Right cardiac atrium (tissue), 5 donors: ENCODE measurements at regions of chr5 and their contacts with region 1.

Region 1: GRCh38 chr5:103475629-103476240 is 86.9 kb downstream of the NUDT12 start:
- DNase-seq: no peak
- ATAC-seq: peak; percentile 41 to 51
- H3K4me3 ChIP-seq: no peak overlapping the region
- H3K27ac ChIP-seq: no peak overlapping the region
- H3K4me1 ChIP-seq: no peaks in the 10 kb centered on the region
- H3K27me3 ChIP-seq: no peaks in the 10 kb centered on the region

Region 2: DNA sequence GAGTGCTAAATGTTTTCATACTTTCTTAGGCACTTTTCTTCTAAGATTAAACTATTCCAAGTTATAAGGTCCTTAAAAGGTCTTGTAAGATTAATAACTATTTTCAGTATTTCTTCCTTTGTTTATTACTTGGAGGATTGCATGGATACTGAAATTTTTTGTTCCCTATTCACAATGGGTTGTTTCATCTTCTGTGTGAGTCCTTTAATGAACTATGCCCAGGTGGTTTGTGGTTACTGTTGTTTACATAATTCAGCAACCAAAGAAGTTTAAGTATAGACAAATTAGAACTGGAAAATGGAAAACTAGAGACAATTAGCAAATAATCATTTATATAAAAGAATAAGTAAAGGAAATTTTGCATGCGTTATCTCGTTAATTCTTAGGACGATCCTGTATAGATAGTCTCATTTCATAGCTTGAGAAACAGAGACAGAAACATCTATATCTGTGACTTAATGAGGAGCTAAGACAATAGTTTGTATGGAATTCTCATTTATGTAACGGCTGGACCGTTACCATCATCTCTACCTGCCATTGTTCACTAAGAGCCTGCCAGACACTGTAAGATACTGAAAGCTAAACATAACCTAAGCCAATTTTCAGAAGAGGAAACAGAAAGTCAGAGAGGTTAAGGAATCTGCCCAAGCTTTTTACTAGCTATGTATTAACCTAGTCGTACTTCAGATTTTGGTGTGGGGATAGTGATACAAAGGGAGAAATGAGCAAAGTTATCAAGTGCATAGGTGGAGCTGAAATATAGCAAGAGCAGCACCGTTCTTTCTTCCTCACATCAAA is 572.5 kb before region 1 on chr5:
- intact Hi-C with region 1: no loop called
- DNase-seq: no peak
- ATAC-seq: peak in 1 of 2 donors; percentile 63
- H3K4me3 ChIP-seq: no peak overlapping the region
- H3K27ac ChIP-seq: no peak overlapping the region
- H3K4me1 ChIP-seq: peaks cover 2% of the 10 kb centered on the region
- H3K27me3 ChIP-seq: no peaks in the 10 kb centered on the region

Region 3: GRCh38 chr5:103232393-103232999 is 243.2 kb before region 1 on chr5:
- intact Hi-C with region 1: loop called (anchors 2 to 10 kb)
- DNase-seq: no peak
- ATAC-seq: peak in 1 of 2 donors; percentile 83
- H3K4me3 ChIP-seq: no peak overlapping the region
- H3K27ac ChIP-seq: no peak overlapping the region
- H3K4me1 ChIP-seq: no peaks in the 10 kb centered on the region
- H3K27me3 ChIP-seq: no peaks in the 10 kb centered on the region

Region 4: GRCh38 chr5:103450333-103451061 is 25.2 kb before region 1 on chr5:
- intact Hi-C with region 1: no loop called
- DNase-seq: no peak
- ATAC-seq: no peak
- H3K4me3 ChIP-seq: no peak overlapping the region
- H3K27ac ChIP-seq: no peak overlapping the region
- H3K4me1 ChIP-seq: no peaks in the 10 kb centered on the region
- H3K27me3 ChIP-seq: no peaks in the 10 kb centered on the region